Right ventricle myocardium superior (tissue), 1 donor: ENCODE measurements at regions of chr1 and their contacts with region 1.

Region 1: GRCh38 chr1:205396967-205397616 is 24.8 kb downstream of the LEMD1 start:
- DNase-seq: no peak
- ATAC-seq: peak; percentile 73

Region 2: GRCh38 chr1:205493241-205494085 is 96.4 kb after region 1 on chr1:
- intact Hi-C with region 1: no loop called
- DNase-seq: peak; percentile 53
- ATAC-seq: peak; percentile 44

Region 3: GRCh38 chr1:205523891-205524793 is 127.0 kb after region 1 on chr1:
- intact Hi-C with region 1: loop called (anchors 5 kb)
- DNase-seq: peak; percentile 85
- ATAC-seq: peak; percentile 67

Region 4: DNA sequence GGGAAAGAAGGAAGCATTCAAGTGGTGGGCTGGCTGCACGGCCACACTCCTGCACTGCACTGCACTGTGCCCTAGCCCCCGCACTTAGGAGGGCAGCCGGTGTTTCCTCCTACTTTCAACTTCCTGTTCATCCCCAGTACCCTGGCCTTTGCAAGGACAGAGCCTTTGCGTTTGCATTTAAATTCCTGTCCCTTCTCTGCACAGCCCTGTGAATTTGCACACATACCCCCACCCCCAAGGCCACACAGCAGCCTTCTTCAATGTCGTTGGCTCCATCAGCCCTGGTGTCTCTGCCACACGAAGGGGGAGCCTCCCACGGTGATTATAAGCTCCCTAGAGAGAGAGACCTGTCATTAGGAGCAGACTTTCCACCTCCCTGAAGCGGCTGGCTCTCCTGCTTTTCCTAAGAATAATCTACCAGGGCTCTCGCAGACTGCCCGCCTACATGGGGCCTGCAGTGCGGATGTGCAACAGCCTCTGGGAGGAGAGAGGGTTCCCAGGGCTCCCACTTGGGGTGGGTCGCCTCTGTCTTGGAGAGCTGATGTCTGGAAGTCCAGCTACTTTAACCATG is 296.4 kb after region 1 on chr1:
- intact Hi-C with region 1: no loop called
- DNase-seq: no peak
- ATAC-seq: no peak